ENCODE measurements at regions of chr19 and their contacts with region 1.

Region 1: DNA sequence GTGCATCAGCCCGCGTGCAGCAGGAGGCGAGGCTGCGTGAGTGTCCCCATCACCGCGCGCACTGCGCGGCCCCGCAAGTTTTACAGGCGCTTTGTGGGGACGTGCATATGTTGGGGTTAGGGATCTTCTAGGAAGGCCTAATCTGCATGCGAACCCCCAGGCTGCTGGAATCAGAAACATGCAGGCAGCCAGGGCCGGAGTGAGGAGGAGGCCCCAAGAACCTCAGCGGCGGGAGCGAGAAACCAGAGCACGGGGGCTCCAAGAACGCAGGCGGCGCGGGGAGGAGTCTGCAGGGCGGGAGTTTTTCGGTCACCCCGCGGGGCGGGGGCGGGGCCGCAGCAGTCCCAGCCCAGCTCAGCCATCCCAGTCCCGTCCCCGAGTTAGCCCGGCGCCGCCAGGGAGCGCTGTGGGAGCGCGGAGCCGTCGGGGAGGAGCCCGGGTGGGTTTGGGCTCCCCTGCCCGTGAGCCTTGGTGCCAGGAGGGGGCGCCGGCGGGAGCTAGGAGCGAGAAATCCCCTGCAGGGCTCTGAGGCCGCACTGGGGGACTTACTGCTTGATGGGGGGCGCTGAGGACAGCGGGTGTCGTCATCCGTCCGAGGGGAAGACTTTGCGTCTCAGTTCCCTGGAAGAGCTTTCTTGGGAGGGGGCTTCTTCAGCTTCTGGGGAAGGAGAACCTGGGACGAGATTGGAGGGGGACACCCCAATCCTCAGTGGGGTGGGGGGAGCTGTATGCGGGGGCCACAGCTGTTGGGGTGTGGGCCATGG is 933 bp upstream of the NRTN start:
- DNase-seq: peak; percentile 79
- H3K4me3 ChIP-seq: peak overlapping the region; percentile 8 to 37 (median 21)
- H3K27ac ChIP-seq: no peak overlapping the region
- H3K4me1 ChIP-seq: peaks cover 6% of the 10 kb centered on the region
- H3K27me3 ChIP-seq: peaks cover 6% of the 10 kb centered on the region
- CTCF ChIP-seq: peak; percentile 65 to 95

Region 2: GRCh38 chr19:5719961-5720790 is 83.8 kb before region 1 on chr19 and contains the starts of genes CATSPERD and LONP1:
- CTCF ChIA-PET with region 1: interaction called, 27 read pairs
- dilution Hi-C with region 1: no loop called
- in situ Hi-C with region 1: no loop called
- intact Hi-C with region 1: no loop called
- DNase-seq: peak; percentile 98
- H3K4me3 ChIP-seq: peak within 1 kb of the TSS; percentile 46 to 94 (median 66)
- H3K27ac ChIP-seq: peak within 1 kb of the TSS; percentile 91
- H3K4me1 ChIP-seq: peaks cover 14% of the 10 kb centered on the region
- H3K27me3 ChIP-seq: no peaks in the 10 kb centered on the region
- CTCF ChIP-seq: peak; percentile 81 to 93
- total RNA-seq, gene CATSPERD: not detected
- total RNA-seq, gene LONP1: 73.7 to 88.3 TPM

Region 3: DNA sequence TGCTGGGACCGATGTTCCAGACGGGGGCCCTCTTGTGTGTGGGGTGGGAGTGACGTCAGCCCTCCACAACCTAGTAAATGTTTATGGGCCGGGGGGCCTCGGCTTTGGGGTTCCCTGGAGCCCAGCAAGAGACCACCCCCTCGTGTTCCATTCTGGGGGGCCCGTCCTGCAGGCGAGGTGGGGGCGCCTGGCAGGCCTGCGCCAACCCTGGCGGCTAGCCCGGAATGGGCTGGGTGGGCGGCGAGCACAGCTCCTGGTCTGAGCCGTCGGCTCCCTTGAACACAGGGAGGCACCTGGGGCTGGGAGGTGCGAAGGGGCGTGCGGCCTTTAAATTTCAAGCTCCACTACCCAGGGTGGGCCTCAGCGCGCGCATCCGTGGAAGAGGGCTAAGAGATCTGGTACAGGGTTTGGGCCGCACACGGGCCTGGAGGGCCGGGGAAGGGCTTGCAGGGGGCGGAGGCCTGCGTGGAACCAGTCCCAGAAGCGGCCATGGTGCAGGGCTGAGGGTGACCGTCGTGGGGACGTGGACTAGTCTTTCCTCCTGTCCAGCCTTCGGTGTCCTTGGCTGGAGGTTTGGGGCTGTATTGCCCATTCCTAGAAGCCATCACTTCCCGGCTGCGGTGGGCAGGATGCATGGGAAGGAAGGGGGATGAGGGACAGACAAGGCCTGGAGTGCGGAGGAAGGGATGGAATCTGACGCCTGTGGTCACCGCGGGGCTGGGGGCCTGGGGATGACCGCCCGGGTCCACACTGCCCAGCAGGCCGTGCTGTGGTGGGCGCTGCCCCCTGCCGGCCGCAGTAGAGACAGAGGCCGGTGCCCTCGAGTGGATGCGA is 88.2 kb after region 1 on chr19:
- CTCF ChIA-PET with region 1: interaction called, 6 read pairs
- dilution Hi-C with region 1: no loop called
- in situ Hi-C with region 1: loop called in 1 of 2 experiments (anchors 5 kb)
- intact Hi-C with region 1: loop called (anchors 1 kb)
- DNase-seq: no peak
- H3K4me3 ChIP-seq: no peak overlapping the region
- H3K27ac ChIP-seq: no peak overlapping the region
- H3K4me1 ChIP-seq: peaks cover 10% of the 10 kb centered on the region
- H3K27me3 ChIP-seq: no peaks in the 10 kb centered on the region
- CTCF ChIP-seq: peak; percentile 50 to 76

Region 4: GRCh38 chr19:5934774-5935472 is 131.0 kb after region 1 on chr19:
- CTCF ChIA-PET with region 1: no interaction called
- dilution Hi-C with region 1: loop called (anchors 5 kb)
- in situ Hi-C with region 1: no loop called
- intact Hi-C with region 1: no loop called
- DNase-seq: no peak
- H3K4me3 ChIP-seq: no peak overlapping the region
- H3K27ac ChIP-seq: no peak overlapping the region
- H3K4me1 ChIP-seq: no peaks in the 10 kb centered on the region
- H3K27me3 ChIP-seq: no peaks in the 10 kb centered on the region
- CTCF ChIP-seq: no peak

Region 5: GRCh38 chr19:6021878-6022569 is 218.1 kb after region 1 on chr19:
- CTCF ChIA-PET with region 1: interaction called, 3 read pairs
- dilution Hi-C with region 1: no loop called
- in situ Hi-C with region 1: no loop called
- intact Hi-C with region 1: loop called (anchors 1 kb)
- DNase-seq: peak; percentile 12
- H3K4me3 ChIP-seq: no peak overlapping the region
- H3K27ac ChIP-seq: no peak overlapping the region
- H3K4me1 ChIP-seq: no peaks in the 10 kb centered on the region
- H3K27me3 ChIP-seq: no peaks in the 10 kb centered on the region
- CTCF ChIP-seq: peak; percentile 51 to 74